Prostate gland (tissue), 2 donors: ENCODE measurements at regions of chr9 and their contacts with region 1.

Region 1: GRCh38 chr9:126235336-126236243 is 91.0 kb upstream of the MVB12B start:
- DNase-seq: no peak
- H3K4me3 ChIP-seq: no peak overlapping the region
- H3K27ac ChIP-seq: no peak overlapping the region
- H3K4me1 ChIP-seq: no peaks in the 10 kb centered on the region
- H3K27me3 ChIP-seq: no peaks in the 10 kb centered on the region
- CTCF ChIP-seq: no peak
- POLR2A ChIP-seq: no peak

Region 2: DNA sequence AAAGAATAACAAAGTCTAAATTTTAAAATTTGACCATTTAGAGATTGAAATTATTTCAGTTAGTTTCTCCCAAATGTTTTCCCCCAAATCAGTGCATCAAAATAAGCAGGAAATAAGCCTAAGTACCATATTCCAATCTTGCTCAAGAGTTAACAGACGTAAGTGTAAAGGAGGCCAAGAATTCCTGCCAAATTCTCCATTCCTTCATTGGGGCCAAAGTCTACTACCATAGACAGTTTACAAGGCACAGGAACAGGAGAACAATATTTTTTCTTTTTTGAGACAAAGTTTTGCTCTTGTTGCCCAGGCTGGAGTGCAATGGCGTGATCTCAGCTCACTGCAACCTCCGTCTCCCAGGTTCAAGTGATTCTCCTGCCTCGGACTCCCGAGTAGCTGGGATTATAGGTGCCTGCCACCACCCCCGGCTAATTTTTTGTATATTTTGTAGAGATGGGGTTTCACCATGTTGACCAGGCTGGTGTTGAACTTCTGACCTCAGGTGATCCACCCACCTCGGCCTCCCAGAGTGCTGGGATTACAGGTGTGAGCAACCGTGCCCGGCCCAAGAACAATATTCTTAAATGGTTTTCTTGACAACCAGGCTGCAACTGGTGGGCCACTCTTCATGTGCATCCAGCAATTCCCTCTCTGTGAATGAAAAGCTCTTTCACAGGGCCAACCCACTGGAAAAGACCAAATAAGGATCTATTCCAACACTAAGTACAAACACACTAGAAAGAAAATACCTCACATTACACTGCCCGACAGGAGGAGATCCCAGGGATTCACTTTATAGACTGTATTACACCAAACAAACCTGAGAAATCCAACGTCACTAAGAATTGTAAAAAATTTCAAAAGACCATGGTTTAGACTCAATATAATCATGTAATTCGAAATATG is 656.3 kb before region 1 on chr9:
- intact Hi-C with region 1: loop called (anchors 10 kb)
- DNase-seq: no peak
- H3K4me3 ChIP-seq: no peak overlapping the region
- H3K27ac ChIP-seq: no peak overlapping the region
- H3K4me1 ChIP-seq: no peaks in the 10 kb centered on the region
- H3K27me3 ChIP-seq: no peaks in the 10 kb centered on the region
- CTCF ChIP-seq: no peak
- POLR2A ChIP-seq: no peak